GM23248 (cell line): ENCODE measurements at regions of chr17 and their contacts with region 1.

Region 1: GRCh38 chr17:6666077-6666521 is 14.5 kb downstream of the C17orf100 start:
- DNase-seq: peak; percentile 89
- H3K4me3 ChIP-seq: no peak overlapping the region
- H3K27ac ChIP-seq: no peak overlapping the region
- H3K4me1 ChIP-seq: no peaks in the 10 kb centered on the region
- H3K27me3 ChIP-seq: peaks cover 18% of the 10 kb centered on the region

Region 2: GRCh38 chr17:6831661-6832263 is 165.7 kb after region 1 on chr17 and contains the start of gene TEKT1:
- in situ Hi-C with region 1: loop called (anchors 10 kb)
- DNase-seq: peak; percentile 74
- H3K4me3 ChIP-seq: no peak within 1 kb of the TSS
- H3K27ac ChIP-seq: no peak within 1 kb of the TSS
- H3K4me1 ChIP-seq: no peaks in the 10 kb centered on the region
- H3K27me3 ChIP-seq: peaks cover 76% of the 10 kb centered on the region
- total RNA-seq, gene TEKT1: not detected in 2 replicates

Region 3: DNA sequence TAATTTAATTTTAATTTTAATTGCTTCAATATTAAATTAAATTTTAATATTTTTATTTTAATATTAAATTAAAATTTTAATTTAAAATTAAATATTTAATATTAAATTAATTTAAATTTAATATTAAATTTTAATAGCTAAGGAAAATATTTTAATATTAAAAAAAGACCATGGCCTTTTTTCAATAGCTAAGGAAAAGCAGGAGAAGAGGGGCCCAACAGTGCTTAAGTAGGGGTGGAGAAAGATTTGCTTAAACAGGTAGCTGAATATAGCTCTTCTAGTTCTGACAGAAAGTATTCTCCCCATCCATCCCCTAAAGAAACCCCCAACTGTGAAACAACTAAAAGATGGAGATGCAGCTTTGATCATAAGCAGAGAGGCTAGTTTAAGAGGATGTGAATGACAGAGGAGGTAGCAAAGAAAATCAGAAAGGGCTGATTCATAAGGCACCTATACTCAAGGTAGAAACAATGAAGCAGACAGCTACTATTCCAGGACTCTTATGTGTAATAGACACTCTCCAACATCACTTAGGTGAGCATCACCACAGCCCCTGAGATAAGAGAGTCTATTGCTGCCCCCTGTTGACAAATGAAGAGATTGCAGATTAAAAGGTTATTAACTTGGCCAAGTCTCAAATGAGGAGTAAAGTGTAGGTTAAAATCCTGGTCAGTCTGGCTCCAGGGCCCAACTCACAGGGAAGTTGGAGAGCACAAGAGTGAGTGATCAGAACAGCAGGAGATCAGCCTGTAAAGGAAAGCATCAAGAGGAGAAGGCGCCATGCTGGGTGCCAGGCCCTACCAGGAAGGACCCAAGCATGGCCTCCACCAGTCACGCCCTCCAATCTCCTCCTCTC is 338.5 kb after region 1 on chr17:
- in situ Hi-C with region 1: loop called (anchors 10 kb)
- DNase-seq: peak; percentile 74
- H3K4me3 ChIP-seq: no peak overlapping the region
- H3K27ac ChIP-seq: no peak overlapping the region
- H3K4me1 ChIP-seq: no peaks in the 10 kb centered on the region
- H3K27me3 ChIP-seq: no peaks in the 10 kb centered on the region